Activated CD8-positive, alpha-beta T cell treated with anti-CD3 and anti-CD28 coated beads, Interleukin-2, amount 10 ng/mL, durations not matched to agents 7 days and 5 days (primary cell): ENCODE measurements at regions of chr17 and their contacts with region 1.

Region 1: DNA sequence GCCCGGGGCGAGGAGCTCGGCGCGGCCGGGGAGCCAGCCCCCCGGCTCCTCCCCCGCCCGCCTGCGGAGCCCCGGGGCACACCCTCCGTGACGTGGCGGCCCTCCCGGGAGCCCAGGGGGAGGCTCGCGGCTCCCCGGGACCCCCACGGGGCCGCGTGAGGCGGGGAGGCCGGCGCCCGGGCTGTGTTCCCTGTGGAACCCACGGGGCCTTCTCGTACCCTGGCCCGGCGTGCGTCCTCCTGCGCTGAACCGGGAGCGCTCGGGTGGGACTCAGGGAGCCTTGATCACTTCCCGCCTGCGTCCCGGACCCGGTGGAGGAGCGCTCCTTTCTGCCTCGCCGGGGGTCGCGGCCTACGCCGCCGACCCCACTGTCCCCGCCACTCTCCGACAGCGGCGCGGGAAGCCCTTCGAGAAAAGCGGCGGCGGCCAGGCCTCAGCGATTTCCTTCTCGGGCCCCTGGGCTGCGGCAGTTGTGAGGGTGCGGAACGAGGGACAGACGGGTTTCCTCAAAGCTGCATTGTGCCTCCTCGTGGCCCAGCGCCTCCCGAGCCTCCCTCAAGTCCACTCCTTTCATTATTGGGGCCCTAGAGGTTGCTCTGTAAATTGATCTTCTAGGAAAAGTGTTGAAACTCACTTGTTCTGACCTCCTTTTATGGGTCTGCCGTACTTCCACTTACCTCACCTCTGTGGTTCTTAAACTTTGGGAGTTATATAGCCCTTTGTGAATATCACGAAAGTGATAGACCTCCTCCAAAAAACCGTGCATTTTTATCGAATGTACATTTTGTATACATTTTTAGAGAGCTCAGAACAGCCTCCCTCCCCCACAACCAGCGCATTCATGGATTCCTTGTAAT is 597 bp downstream of the LIG3 start:
- DNase-seq: peak; percentile 85
- ATAC-seq: peak; percentile 89
- H3K4me3 Mint-ChIP-seq: peak overlapping the region; percentile 79
- H3K27ac Mint-ChIP-seq: peak overlapping the region; percentile 85
- H3K4me1 Mint-ChIP-seq: peaks cover 32% of the 10 kb centered on the region
- H3K27me3 Mint-ChIP-seq: no peaks in the 10 kb centered on the region

Region 2: GRCh38 chr17:34961093-34961911 is 19.6 kb before region 1 on chr17 and contains the starts of genes CCT6B and ZNF830:
- CTCF ChIA-PET with region 1: interaction called, 5 read pairs
- POLR2A ChIA-PET with region 1: interaction called, 23 read pairs
- DNase-seq: peak; percentile 96
- ATAC-seq: peak; percentile 91
- H3K4me3 Mint-ChIP-seq: peak within 1 kb of the TSS; percentile 97
- H3K27ac Mint-ChIP-seq: peak within 1 kb of the TSS; percentile 99
- H3K4me1 Mint-ChIP-seq: peaks cover 23% of the 10 kb centered on the region
- H3K27me3 Mint-ChIP-seq: no peaks in the 10 kb centered on the region
- total RNA-seq, gene CCT6B: 0.83 to 1.1 TPM
- total RNA-seq, gene ZNF830: 22.1 to 24.1 TPM

Region 3: GRCh38 chr17:34990921-34991365 is 10.0 kb after region 1 on chr17:
- CTCF ChIA-PET with region 1: interaction called, 27 read pairs
- POLR2A ChIA-PET with region 1: interaction called, 9 read pairs
- DNase-seq: no peak
- ATAC-seq: no peak
- H3K4me3 Mint-ChIP-seq: no peak overlapping the region
- H3K27ac Mint-ChIP-seq: peak overlapping the region; percentile 72
- H3K4me1 Mint-ChIP-seq: peaks cover 36% of the 10 kb centered on the region
- H3K27me3 Mint-ChIP-seq: no peaks in the 10 kb centered on the region

Region 4: DNA sequence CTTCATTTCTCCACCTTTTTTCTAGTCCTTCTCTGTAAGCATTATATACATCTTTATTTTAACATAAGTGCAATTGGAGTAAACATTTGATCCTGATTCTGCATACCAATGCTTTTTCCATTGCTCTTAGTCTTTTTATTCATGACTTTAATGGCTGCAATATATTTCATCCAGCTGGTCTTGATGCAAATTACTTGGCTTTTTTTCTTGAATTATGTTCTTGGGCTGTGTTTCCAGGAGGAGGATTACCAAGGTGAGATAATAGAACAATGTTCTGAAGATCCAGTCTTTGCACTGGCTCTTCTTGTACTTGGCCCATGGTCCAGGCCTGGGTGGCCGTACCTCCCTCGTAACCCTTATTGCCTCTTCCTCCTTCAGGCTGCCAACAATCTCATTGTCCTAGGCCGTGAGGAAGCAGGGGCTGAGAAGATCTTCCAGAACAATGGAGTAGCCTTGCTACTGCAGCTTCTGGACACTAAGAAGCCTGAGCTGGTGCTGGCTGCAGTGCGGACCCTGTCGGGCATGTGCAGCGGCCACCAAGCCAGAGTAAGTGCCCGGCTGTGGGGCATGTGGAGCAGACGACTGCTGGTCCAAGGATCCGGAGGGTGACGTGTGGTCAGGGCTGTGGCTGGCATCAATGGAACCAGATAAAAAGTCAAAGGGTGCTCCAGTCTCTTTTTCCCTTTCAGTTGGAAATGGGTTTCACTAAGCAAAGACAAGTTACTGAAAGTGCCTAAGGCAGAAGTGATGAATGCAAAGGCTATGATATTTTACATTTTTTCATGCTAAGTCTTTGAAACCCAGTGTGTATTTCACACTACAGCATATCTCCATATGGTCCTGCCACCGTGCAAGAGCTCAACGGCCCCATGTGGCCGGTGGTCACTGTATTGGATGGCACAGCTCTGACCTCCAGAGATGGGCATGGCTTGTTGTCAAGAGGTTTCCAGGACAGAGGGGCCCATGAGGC is 173.6 kb after region 1 on chr17:
- CTCF ChIA-PET with region 1: no interaction called
- POLR2A ChIA-PET with region 1: no interaction called
- DNase-seq: no peak
- ATAC-seq: no peak
- H3K4me3 Mint-ChIP-seq: no peak overlapping the region
- H3K27ac Mint-ChIP-seq: no peak overlapping the region
- H3K4me1 Mint-ChIP-seq: peaks cover 6% of the 10 kb centered on the region
- H3K27me3 Mint-ChIP-seq: peaks cover 5% of the 10 kb centered on the region